ENCODE measurements at regions of chr12 and their contacts with region 1.

Region 1: GRCh38 chr12:105107494-105108371 is at the start of gene WASHC4:
- DNase-seq: peak; percentile 96 to 97
- ATAC-seq: peak; percentile 99 to 100 (median 99)
- H3K4me3 ChIP-seq: peak within 1 kb of the TSS; percentile 96
- H3K27ac ChIP-seq: peak within 1 kb of the TSS; percentile 97
- H3K4me1 ChIP-seq: peaks cover 29% of the 10 kb centered on the region
- H3K27me3 ChIP-seq: no peaks in the 10 kb centered on the region
- CTCF ChIP-seq: no peak
- total RNA-seq, gene WASHC4: 21.8 to 32.6 (median 28.0) TPM

Region 2: GRCh38 chr12:104121001-104121400 is 986.7 kb before region 1 on chr12:
- intact Hi-C with region 1: loop called in 1 of 2 experiments (anchors 10 kb)
- DNase-seq: no peak
- ATAC-seq: peak in 1 of 4 donors; percentile 49
- H3K4me3 ChIP-seq: no peak overlapping the region
- H3K27ac ChIP-seq: no peak overlapping the region
- H3K4me1 ChIP-seq: no peaks in the 10 kb centered on the region
- H3K27me3 ChIP-seq: no peaks in the 10 kb centered on the region
- CTCF ChIP-seq: no peak

Region 3: DNA sequence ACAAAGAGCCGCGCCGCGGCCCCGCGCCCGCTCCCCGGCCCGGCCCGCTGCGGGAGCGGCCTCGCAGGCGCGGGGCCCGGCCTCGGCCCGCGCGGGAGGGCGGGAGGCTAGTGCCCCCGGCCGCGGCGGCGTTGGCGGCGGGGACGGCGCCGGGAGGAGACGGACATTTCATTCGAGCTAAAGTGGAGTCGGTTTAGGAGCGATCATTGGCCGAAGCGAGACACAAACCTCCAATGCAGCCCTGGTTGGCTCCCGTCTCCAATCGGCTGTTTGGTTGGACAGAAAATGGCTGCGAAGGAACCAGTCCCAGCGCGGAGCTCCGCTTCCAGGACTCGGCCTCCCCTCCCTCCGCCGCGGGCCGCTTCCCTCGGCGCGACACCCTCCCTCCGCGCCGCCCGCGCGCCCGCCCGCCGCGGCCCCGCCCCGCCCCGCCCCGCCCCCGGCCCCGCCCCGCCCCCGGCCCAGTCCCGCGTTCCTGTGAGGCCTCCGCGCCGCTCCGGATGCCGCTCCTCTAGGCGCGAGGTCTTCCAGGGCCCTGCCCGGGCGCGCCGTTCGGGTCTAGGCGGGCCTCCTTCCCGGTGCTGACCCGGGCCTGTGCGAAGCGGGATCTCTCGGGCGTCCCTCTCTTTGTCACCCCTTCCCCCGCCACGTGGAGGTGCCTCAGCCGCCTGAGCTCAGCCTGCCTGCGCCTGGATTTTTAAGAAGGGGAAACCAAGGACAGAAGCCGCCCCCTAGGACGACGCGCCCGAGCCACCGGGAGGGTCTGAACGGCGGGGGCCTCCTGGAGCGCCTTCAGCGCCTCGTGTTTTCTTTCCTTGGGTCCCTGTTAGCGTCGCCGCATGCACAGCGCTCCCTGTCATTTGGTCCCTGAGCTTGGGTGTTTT is 969.6 kb before region 1 on chr12 and contains the start of gene NFYB:
- intact Hi-C with region 1: loop called in 1 of 2 experiments (anchors 5 kb)
- DNase-seq: peak; percentile 92 to 96
- ATAC-seq: peak; percentile 95 to 97 (median 96)
- H3K4me3 ChIP-seq: peak within 1 kb of the TSS; percentile 92
- H3K27ac ChIP-seq: peak within 1 kb of the TSS; percentile 94
- H3K4me1 ChIP-seq: peaks cover 27% of the 10 kb centered on the region
- H3K27me3 ChIP-seq: peaks cover 0 to 2% (median 0%) of the 10 kb centered on the region in 3 donors
- CTCF ChIP-seq: no peak
- total RNA-seq, gene NFYB: 14.5 to 32.2 (median 21.9) TPM

Region 4: GRCh38 chr12:105158876-105159275 is 51.1 kb after region 1 on chr12:
- intact Hi-C with region 1: loop called in 1 of 2 experiments (anchors 5 kb)
- DNase-seq: no peak
- ATAC-seq: no peak
- H3K4me3 ChIP-seq: no peak overlapping the region
- H3K27ac ChIP-seq: no peak overlapping the region
- H3K4me1 ChIP-seq: no peaks in the 10 kb centered on the region
- H3K27me3 ChIP-seq: no peaks in the 10 kb centered on the region
- CTCF ChIP-seq: no peak